ENCODE measurements at regions of chr2 and their contacts with region 1.

Region 1: DNA sequence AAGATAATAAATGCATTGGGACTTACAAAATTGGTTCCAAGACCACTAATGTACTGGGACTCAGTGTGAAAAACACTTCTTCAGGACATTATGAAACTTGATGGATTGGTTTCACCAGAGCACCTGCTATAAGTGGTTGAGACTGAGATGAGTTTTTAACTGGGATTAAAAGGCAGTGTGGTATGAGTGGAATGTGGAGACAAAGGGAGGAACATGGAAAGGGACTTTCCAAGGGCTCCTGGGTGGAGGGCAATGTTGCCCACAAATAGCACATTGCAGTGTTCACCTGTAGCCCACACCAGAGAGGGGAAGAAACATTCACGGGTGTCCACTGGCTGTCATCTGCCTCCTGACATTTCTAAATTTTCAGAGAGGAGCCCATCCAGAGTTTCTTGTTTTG is 253.3 kb upstream of the TANK start:
- DNase-seq: no peak
- ATAC-seq: no peak

Region 2: GRCh38 chr2:160324161-160324800 is 582.6 kb before region 1 on chr2:
- intact Hi-C with region 1: loop called (anchors 10 kb)
- DNase-seq: peak; percentile 61
- ATAC-seq: peak; percentile 34

Region 3: GRCh38 chr2:160984426-160985077 is 77.7 kb after region 1 on chr2:
- intact Hi-C with region 1: no loop called
- DNase-seq: peak; percentile 48
- ATAC-seq: peak; percentile 95

Measured in left ventricle myocardium superior (tissue), 1 donor.